WTC11 (cell line): ENCODE measurements at regions of chr17 and their contacts with region 1.

Region 1: GRCh38 chr17:58417300-58418092 is at the start of gene RNF43:
- DNase-seq: peak; percentile 93
- ATAC-seq: peak; percentile 100
- H3K4me3 Mint-ChIP-seq: peak within 1 kb of the TSS; percentile 82
- H3K27ac Mint-ChIP-seq: peak within 1 kb of the TSS; percentile 92
- H3K4me1 Mint-ChIP-seq: peaks cover 28% of the 10 kb centered on the region
- H3K27me3 Mint-ChIP-seq: peaks cover 6% of the 10 kb centered on the region
- CTCF ChIP-seq: peak; percentile 56; the same call in 1 of the 2 replicates
- total RNA-seq, gene RNF43: 3.2 to 3.6 TPM (median 3.5 TPM) in 3 replicates

Region 2: GRCh38 chr17:58200017-58200633 is 217.4 kb before region 1 on chr17:
- CTCF ChIA-PET with region 1: interaction called, 15 read pairs
- POLR2A ChIA-PET with region 1: no interaction called
- DNase-seq: peak; percentile 83
- ATAC-seq: peak; percentile 96
- H3K4me3 Mint-ChIP-seq: no peak overlapping the region
- H3K27ac Mint-ChIP-seq: no peak overlapping the region
- H3K4me1 Mint-ChIP-seq: no peaks in the 10 kb centered on the region
- H3K27me3 Mint-ChIP-seq: peaks cover 11% of the 10 kb centered on the region
- CTCF ChIP-seq: peak; percentile 61; the same call in 1 of the 2 replicates

Region 3: GRCh38 chr17:58267347-58268324 is 149.9 kb before region 1 on chr17:
- CTCF ChIA-PET with region 1: no interaction called
- POLR2A ChIA-PET with region 1: no interaction called
- DNase-seq: no peak
- ATAC-seq: no peak
- H3K4me3 Mint-ChIP-seq: no peak overlapping the region
- H3K27ac Mint-ChIP-seq: no peak overlapping the region
- H3K4me1 Mint-ChIP-seq: no peaks in the 10 kb centered on the region
- H3K27me3 Mint-ChIP-seq: peaks cover 32% of the 10 kb centered on the region
- CTCF ChIP-seq: no peak

Region 4: GRCh38 chr17:58291246-58291645 is 126.2 kb before region 1 on chr17:
- CTCF ChIA-PET with region 1: no interaction called
- POLR2A ChIA-PET with region 1: no interaction called
- DNase-seq: no peak
- ATAC-seq: no peak
- H3K4me3 Mint-ChIP-seq: no peak overlapping the region
- H3K27ac Mint-ChIP-seq: no peak overlapping the region
- H3K4me1 Mint-ChIP-seq: no peaks in the 10 kb centered on the region
- H3K27me3 Mint-ChIP-seq: peaks cover 16% of the 10 kb centered on the region
- CTCF ChIP-seq: no peak

Region 5: GRCh38 chr17:58303971-58304725 is 113.3 kb before region 1 on chr17:
- CTCF ChIA-PET with region 1: interaction called, 26 read pairs
- POLR2A ChIA-PET with region 1: interaction called, 3 read pairs
- DNase-seq: peak; percentile 74
- ATAC-seq: peak; percentile 76
- H3K4me3 Mint-ChIP-seq: no peak overlapping the region
- H3K27ac Mint-ChIP-seq: no peak overlapping the region
- H3K4me1 Mint-ChIP-seq: peaks cover 11% of the 10 kb centered on the region
- H3K27me3 Mint-ChIP-seq: no peaks in the 10 kb centered on the region; the same call in 1 of the 2 replicates
- CTCF ChIP-seq: peak; percentile 94

Region 6: GRCh38 chr17:58337600-58338453 is 79.7 kb before region 1 on chr17:
- CTCF ChIA-PET with region 1: interaction called, 34 read pairs
- POLR2A ChIA-PET with region 1: interaction called, 13 read pairs
- DNase-seq: peak; percentile 84
- ATAC-seq: peak; percentile 84
- H3K4me3 Mint-ChIP-seq: 0 out of 2 replicates have a peak overlapping the region, but pooled peaks have one; percentile 14
- H3K27ac Mint-ChIP-seq: peak overlapping the region; percentile 88
- H3K4me1 Mint-ChIP-seq: peaks cover 45% of the 10 kb centered on the region
- H3K27me3 Mint-ChIP-seq: no peaks in the 10 kb centered on the region; the same call in 1 of the 2 replicates
- CTCF ChIP-seq: no peak

Region 7: DNA sequence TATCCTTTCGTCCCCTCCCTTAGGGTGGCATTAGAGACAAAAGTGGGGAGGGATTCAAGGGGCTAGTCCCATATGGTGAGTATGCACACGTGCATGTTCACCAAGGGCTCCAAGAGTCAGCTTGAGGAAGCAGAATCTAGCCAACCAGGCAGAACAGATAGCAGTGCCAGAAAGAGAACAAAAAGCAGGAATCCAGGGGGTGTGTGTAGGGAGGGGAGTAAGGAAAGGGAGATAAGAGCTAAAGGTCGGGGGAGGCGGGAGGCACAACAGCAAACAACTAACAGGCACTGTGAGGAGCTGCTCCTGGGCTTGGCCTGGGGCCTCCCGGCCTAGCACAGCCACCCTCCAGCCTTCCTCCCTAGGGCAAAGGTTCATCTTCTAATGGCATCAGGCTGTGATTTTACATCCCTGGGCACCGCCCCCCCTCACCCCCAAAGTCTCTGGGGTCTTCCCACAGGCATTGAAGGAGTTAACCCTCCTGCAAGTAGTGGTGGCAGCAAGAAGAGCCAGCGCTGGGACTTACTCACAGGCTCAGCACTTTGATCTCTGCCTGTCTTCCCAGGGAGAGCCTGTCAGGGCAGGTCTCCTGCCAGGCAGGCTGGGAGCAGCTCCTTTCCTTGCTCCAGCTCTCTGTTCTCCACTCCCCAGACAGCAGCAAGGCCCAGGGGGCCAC is 53.1 kb before region 1 on chr17:
- CTCF ChIA-PET with region 1: interaction called, 13 read pairs
- POLR2A ChIA-PET with region 1: no interaction called
- DNase-seq: no peak
- ATAC-seq: peak; percentile 47; the same call in 1 of the 2 replicates
- H3K4me3 Mint-ChIP-seq: no peak overlapping the region
- H3K27ac Mint-ChIP-seq: no peak overlapping the region; the same call in 1 of the 2 replicates
- H3K4me1 Mint-ChIP-seq: peaks cover 11% of the 10 kb centered on the region
- H3K27me3 Mint-ChIP-seq: 0 out of 2 replicates have a peak, but pooled peaks cover 3% of the 10 kb centered on the region
- CTCF ChIP-seq: no peak

Region 8: DNA sequence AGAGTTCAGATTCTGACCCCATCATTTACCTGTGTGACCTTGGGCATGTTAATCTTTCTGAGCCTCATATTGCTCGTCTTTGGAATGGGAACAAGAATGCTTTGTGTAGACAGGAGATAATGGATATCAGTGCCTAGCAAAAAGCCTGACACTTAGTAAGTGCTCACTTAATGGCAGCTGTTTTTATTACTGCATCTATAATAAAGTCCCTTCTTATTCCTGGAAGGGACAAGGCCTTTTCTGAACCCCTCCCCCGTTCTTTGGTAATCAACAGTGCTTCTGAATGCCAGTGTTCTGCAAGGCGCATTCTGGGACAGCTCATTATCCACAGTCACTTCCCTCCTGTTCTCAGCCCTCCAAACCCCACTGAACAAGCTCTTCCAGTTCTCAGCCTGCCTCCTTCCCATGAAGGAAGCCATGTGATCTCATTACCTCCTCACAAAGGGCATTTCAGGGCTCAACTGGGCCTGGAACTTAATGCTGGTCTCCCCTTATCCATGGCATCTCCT is 40.3 kb before region 1 on chr17:
- CTCF ChIA-PET with region 1: interaction called, 11 read pairs
- POLR2A ChIA-PET with region 1: no interaction called
- DNase-seq: no peak
- ATAC-seq: peak; percentile 42
- H3K4me3 Mint-ChIP-seq: no peak overlapping the region
- H3K27ac Mint-ChIP-seq: peak overlapping the region; percentile 43
- H3K4me1 Mint-ChIP-seq: peaks cover 42% of the 10 kb centered on the region
- H3K27me3 Mint-ChIP-seq: no peaks in the 10 kb centered on the region
- CTCF ChIP-seq: no peak

Region 9: GRCh38 chr17:58432806-58433572 is 15.5 kb after region 1 on chr17:
- CTCF ChIA-PET with region 1: interaction called, 11 read pairs
- POLR2A ChIA-PET with region 1: interaction called, 3 read pairs
- DNase-seq: no peak
- ATAC-seq: no peak
- H3K4me3 Mint-ChIP-seq: no peak overlapping the region
- H3K27ac Mint-ChIP-seq: no peak overlapping the region
- H3K4me1 Mint-ChIP-seq: no peaks in the 10 kb centered on the region
- H3K27me3 Mint-ChIP-seq: no peaks in the 10 kb centered on the region; the same call in 1 of the 2 replicates
- CTCF ChIP-seq: no peak

Region 10: GRCh38 chr17:58531661-58532554 is 114.4 kb after region 1 on chr17:
- CTCF ChIA-PET with region 1: no interaction called
- POLR2A ChIA-PET with region 1: no interaction called
- DNase-seq: peak; percentile 70
- ATAC-seq: peak; percentile 79
- H3K4me3 Mint-ChIP-seq: peak overlapping the region; percentile 68
- H3K27ac Mint-ChIP-seq: no peak overlapping the region
- H3K4me1 Mint-ChIP-seq: peaks cover 39% of the 10 kb centered on the region
- H3K27me3 Mint-ChIP-seq: peaks cover 52% of the 10 kb centered on the region
- CTCF ChIP-seq: no peak

Region 11: DNA sequence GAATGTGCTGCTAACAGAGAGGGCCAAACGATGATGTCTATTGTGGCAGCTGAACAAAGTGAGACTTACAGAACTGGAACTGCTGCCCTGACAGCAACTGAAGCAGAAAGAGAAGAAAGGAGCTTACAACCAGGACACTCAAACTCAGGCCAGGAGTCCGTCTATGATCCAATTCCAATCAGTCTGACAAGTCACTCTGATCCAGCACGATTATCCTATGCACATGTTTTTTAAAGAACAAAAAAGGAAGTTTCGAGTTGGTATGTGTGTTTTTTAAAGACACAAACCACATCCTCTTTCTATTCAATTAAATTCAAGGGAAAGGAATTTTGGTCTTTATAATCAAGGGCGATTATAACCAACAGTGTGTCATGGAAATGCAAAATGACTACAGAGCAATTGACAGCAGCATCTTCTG is 139.3 kb after region 1 on chr17:
- CTCF ChIA-PET with region 1: no interaction called
- POLR2A ChIA-PET with region 1: no interaction called
- DNase-seq: no peak
- ATAC-seq: no peak
- H3K4me3 Mint-ChIP-seq: no peak overlapping the region
- H3K27ac Mint-ChIP-seq: no peak overlapping the region
- H3K4me1 Mint-ChIP-seq: no peaks in the 10 kb centered on the region
- H3K27me3 Mint-ChIP-seq: no peaks in the 10 kb centered on the region
- CTCF ChIP-seq: no peak